ENCODE measurements at regions of chr6 and their contacts with region 1.

Region 1: GRCh38 chr6:31197559-31198305 is 27.2 kb upstream of the POU5F1 start:
- DNase-seq: peak; percentile 61
- H3K4me3 ChIP-seq: peak overlapping the region; percentile 71 to 100
- H3K27ac ChIP-seq: peak overlapping the region; percentile 58 to 89
- H3K4me1 ChIP-seq: peaks cover 0 to 5% of the 10 kb centered on the region in 2 experiments; a peak in 1 of 4 replicates
- H3K27me3 ChIP-seq: no peaks in the 10 kb centered on the region
- CTCF ChIP-seq: no peak
- EP300 ChIP-seq: no peak
- RAD21 ChIP-seq: no peak

Region 2: DNA sequence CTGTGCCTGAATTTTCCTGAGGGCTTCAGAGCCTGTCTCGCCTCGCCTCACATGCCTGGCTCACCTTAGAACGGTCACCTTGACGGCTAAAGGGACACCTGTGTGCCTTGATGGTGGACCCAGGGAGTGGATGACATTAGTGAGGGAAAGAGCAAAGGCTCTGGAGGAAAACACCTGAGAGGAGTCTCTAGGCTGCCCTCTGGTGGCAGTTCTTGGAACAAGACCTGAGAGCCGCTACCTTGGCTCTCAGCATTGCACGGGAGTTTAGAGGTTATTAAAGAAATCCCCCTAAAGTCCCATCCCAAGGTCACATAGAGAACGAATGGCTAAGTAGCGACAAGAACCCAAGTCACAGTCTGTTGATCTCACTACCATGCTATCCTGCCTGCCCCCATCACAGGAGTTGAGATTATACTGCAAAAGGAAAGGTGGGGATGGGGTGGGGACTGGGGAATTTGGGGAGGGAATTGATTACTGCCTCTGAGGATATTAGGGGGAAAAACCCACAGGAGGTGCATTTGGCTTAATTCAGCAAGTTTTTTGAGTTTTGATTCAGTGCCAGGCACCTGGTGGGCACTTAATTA is 69.5 kb before region 1 on chr6:
- CTCF ChIA-PET with region 1: interaction called, 89 read pairs
- POLR2A ChIA-PET with region 1: no interaction called
- DNase-seq: peak; percentile 60
- H3K4me3 ChIP-seq: no peak overlapping the region; a peak in 1 of 4 replicates
- H3K27ac ChIP-seq: no peak overlapping the region
- H3K4me1 ChIP-seq: peaks cover 0 to 6% of the 10 kb centered on the region in 2 experiments; a peak in 2 of 4 replicates
- H3K27me3 ChIP-seq: no peaks in the 10 kb centered on the region
- CTCF ChIP-seq: peak; percentile 73
- EP300 ChIP-seq: no peak
- RAD21 ChIP-seq: peak; percentile 39

Region 3: GRCh38 chr6:31143148-31143547 is 54.6 kb before region 1 on chr6:
- CTCF ChIA-PET with region 1: interaction called, 89 read pairs
- POLR2A ChIA-PET with region 1: no interaction called
- DNase-seq: no peak
- H3K4me3 ChIP-seq: no peak overlapping the region
- H3K27ac ChIP-seq: no peak overlapping the region
- H3K4me1 ChIP-seq: peaks cover 0 to 11% of the 10 kb centered on the region in 2 experiments; a peak in 1 of 4 replicates
- H3K27me3 ChIP-seq: no peaks in the 10 kb centered on the region
- CTCF ChIP-seq: no peak
- EP300 ChIP-seq: no peak
- RAD21 ChIP-seq: no peak

Region 4: GRCh38 chr6:31158863-31159855 is 38.6 kb before region 1 on chr6:
- CTCF ChIA-PET with region 1: interaction called, 10 read pairs
- POLR2A ChIA-PET with region 1: no interaction called
- DNase-seq: peak; percentile 51
- H3K4me3 ChIP-seq: peak overlapping the region; percentile 83 to 93
- H3K27ac ChIP-seq: no peak overlapping the region
- H3K4me1 ChIP-seq: peaks cover 0 to 18% of the 10 kb centered on the region in 2 experiments; a peak in 1 of 4 replicates
- H3K27me3 ChIP-seq: no peaks in the 10 kb centered on the region
- CTCF ChIP-seq: no peak
- EP300 ChIP-seq: no peak
- RAD21 ChIP-seq: no peak

Region 5: GRCh38 chr6:31172973-31173384 is 24.8 kb before region 1 on chr6:
- CTCF ChIA-PET with region 1: interaction called, 10 read pairs
- POLR2A ChIA-PET with region 1: no interaction called
- DNase-seq: no peak
- H3K4me3 ChIP-seq: no peak overlapping the region
- H3K27ac ChIP-seq: no peak overlapping the region
- H3K4me1 ChIP-seq: no peaks in the 10 kb centered on the region
- H3K27me3 ChIP-seq: no peaks in the 10 kb centered on the region
- CTCF ChIP-seq: no peak
- EP300 ChIP-seq: no peak
- RAD21 ChIP-seq: no peak